CD4-positive, alpha-beta memory T cell (primary cell): ENCODE measurements at regions of chr19 and their contacts with region 1.

Region 1: GRCh38 chr19:38618590-38619360 is at the start of gene EIF3K:
- DNase-seq: peak; percentile 95 to 97 (median 96)
- H3K4me3 ChIP-seq: peak within 1 kb of the TSS; percentile 97 to 99
- H3K4me3 Mint-ChIP-seq: peak within 1 kb of the TSS; percentile 95 to 100 (median 100)
- H3K27ac ChIP-seq: peak within 1 kb of the TSS; percentile 90
- H3K27ac Mint-ChIP-seq: peak within 1 kb of the TSS; percentile 93 to 100 (median 99)
- H3K4me1 ChIP-seq: peaks cover 57% of the 10 kb centered on the region
- H3K4me1 Mint-ChIP-seq: peaks cover 28 to 60% (median 45%) of the 10 kb centered on the region in 4 donors
- H3K27me3 ChIP-seq: no peaks in the 10 kb centered on the region
- H3K27me3 Mint-ChIP-seq: no peaks in the 10 kb centered on the region
- total RNA-seq, gene EIF3K: 320 to 340 TPM

Region 2: GRCh38 chr19:38514812-38515633 is 103.8 kb before region 1 on chr19:
- CTCF ChIA-PET with region 1: interaction called, 25 read pairs
- POLR2A ChIA-PET with region 1: interaction called, 16 read pairs
- intact Hi-C with region 1: loop called (anchors 1 kb)
- DNase-seq: peak; percentile 74 to 79 (median 77)
- H3K4me3 ChIP-seq: no peak overlapping the region
- H3K4me3 Mint-ChIP-seq: peak overlapping the region in 3 of 8 donors; percentile 20 to 45 (median 22)
- H3K27ac ChIP-seq: no peak overlapping the region
- H3K27ac Mint-ChIP-seq: peak overlapping the region in 5 of 7 donors; percentile 35 to 57 (median 43)
- H3K4me1 ChIP-seq: peaks cover 19% of the 10 kb centered on the region
- H3K4me1 Mint-ChIP-seq: peaks cover 9 to 22% (median 16%) of the 10 kb centered on the region in 4 donors
- H3K27me3 ChIP-seq: no peaks in the 10 kb centered on the region
- H3K27me3 Mint-ChIP-seq: peaks cover 0 to 2% of the 10 kb centered on the region in 2 donors

Region 3: DNA sequence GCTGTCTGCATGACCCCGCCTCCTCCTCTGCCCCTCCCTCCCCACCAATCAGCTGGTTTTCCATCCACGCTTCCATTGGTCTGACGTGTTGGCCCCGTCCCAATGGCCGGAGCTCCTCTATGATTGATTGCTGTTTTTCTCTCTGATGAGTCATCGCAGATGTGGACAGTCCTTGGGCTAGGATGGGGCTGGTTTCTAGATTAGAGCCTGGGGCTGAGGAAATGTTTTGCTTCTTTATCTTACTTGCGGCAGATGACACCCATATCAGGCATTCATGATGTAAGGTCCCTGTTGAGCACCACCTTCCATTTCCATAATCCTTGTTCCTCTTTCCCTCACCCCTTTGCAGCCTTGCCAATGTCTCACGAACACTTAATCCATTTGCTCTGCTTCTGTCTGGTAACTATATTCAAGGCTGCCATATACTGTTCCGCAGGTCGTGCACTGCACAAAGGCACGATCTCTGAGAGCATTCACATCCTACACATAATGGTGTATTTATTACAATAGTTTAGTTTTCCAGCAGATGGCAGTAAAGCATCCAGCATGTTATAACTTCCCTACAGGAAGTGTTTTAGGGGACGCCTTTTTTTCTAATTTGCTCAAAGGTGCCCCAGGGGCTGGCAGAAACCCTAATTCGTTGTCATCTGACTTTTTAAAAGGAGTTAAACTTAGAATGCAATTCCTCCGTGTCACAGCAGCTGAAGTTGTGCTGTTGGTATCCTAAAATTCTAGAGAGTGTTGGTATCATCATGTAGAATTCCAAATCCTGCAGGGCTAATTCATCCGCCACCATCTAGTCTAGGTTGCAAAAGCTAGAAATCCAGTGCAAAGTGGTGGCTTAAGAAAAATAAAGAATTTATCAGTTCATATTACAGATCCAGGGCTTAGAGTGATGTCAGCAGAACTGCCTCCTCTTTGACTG is 74.5 kb before region 1 on chr19:
- CTCF ChIA-PET with region 1: interaction called, 31 read pairs
- POLR2A ChIA-PET with region 1: interaction called, 36 read pairs
- intact Hi-C with region 1: loop called (anchors 1 kb)
- DNase-seq: peak in 4 of 5 donors; percentile 61 to 71 (median 65)
- H3K4me3 ChIP-seq: no peak overlapping the region
- H3K4me3 Mint-ChIP-seq: peak overlapping the region in 7 of 8 donors; percentile 21 to 76 (median 56)
- H3K27ac ChIP-seq: no peak overlapping the region
- H3K27ac Mint-ChIP-seq: peak overlapping the region in 4 of 7 donors; percentile 27 to 89 (median 72)
- H3K4me1 ChIP-seq: peaks cover 23% of the 10 kb centered on the region
- H3K4me1 Mint-ChIP-seq: peaks cover 15 to 32% (median 21%) of the 10 kb centered on the region in 4 donors
- H3K27me3 ChIP-seq: no peaks in the 10 kb centered on the region
- H3K27me3 Mint-ChIP-seq: no peaks in the 10 kb centered on the region

Region 4: GRCh38 chr19:38559428-38560401 is 59.1 kb before region 1 on chr19:
- CTCF ChIA-PET with region 1: interaction called, 18 read pairs
- POLR2A ChIA-PET with region 1: interaction called, 22 read pairs
- intact Hi-C with region 1: loop called (anchors 2 kb)
- DNase-seq: peak; percentile 44 to 76 (median 47)
- H3K4me3 ChIP-seq: peak overlapping the region; percentile 5 to 19
- H3K4me3 Mint-ChIP-seq: peak overlapping the region in 7 of 8 donors; percentile 11 to 82 (median 50)
- H3K27ac ChIP-seq: no peak overlapping the region
- H3K27ac Mint-ChIP-seq: peak overlapping the region in 6 of 7 donors; percentile 45 to 80 (median 65)
- H3K4me1 ChIP-seq: peaks cover 43% of the 10 kb centered on the region
- H3K4me1 Mint-ChIP-seq: peaks cover 23 to 63% (median 48%) of the 10 kb centered on the region in 4 donors
- H3K27me3 ChIP-seq: no peaks in the 10 kb centered on the region
- H3K27me3 Mint-ChIP-seq: peaks cover 0 to 3% of the 10 kb centered on the region in 2 donors

Region 5: GRCh38 chr19:38899447-38900219 is 280.9 kb after region 1 on chr19 and contains the starts of genes NFKBIB and SIRT2:
- CTCF ChIA-PET with region 1: no interaction called
- POLR2A ChIA-PET with region 1: interaction called, 3 read pairs
- intact Hi-C with region 1: loop called (anchors 1 kb)
- DNase-seq: peak; percentile 98 to 100 (median 100)
- H3K4me3 ChIP-seq: peak within 1 kb of the TSS; percentile 71 to 87
- H3K4me3 Mint-ChIP-seq: peak within 1 kb of the TSS; percentile 92 to 98 (median 96)
- H3K27ac ChIP-seq: peak within 1 kb of the TSS; percentile 99
- H3K27ac Mint-ChIP-seq: peak within 1 kb of the TSS; percentile 90 to 100 (median 99)
- H3K4me1 ChIP-seq: peaks cover 34% of the 10 kb centered on the region
- H3K4me1 Mint-ChIP-seq: peaks cover 17 to 59% (median 39%) of the 10 kb centered on the region in 4 donors
- H3K27me3 ChIP-seq: no peaks in the 10 kb centered on the region
- H3K27me3 Mint-ChIP-seq: no peaks in the 10 kb centered on the region
- total RNA-seq, gene NFKBIB: 23.9 to 26.0 TPM
- total RNA-seq, gene SIRT2: 47.0 to 50.0 TPM